Activated CD8-positive, alpha-beta T cell treated with anti-CD3 and anti-CD28 coated beads, Interleukin-2, amount 10 ng/mL, durations not matched to agents 7 days and 5 days (primary cell): ENCODE measurements at regions of chr3 and their contacts with region 1.

Region 1: GRCh38 chr3:149752051-149752787 is at the start of gene COMMD2:
- DNase-seq: peak; percentile 86
- ATAC-seq: peak; percentile 99
- H3K4me3 Mint-ChIP-seq: peak within 1 kb of the TSS; percentile 95
- H3K27ac Mint-ChIP-seq: peak within 1 kb of the TSS; percentile 93
- H3K4me1 Mint-ChIP-seq: peaks cover 17% of the 10 kb centered on the region
- H3K27me3 Mint-ChIP-seq: no peaks in the 10 kb centered on the region
- total RNA-seq, gene COMMD2: 32.3 to 35.1 TPM

Region 2: DNA sequence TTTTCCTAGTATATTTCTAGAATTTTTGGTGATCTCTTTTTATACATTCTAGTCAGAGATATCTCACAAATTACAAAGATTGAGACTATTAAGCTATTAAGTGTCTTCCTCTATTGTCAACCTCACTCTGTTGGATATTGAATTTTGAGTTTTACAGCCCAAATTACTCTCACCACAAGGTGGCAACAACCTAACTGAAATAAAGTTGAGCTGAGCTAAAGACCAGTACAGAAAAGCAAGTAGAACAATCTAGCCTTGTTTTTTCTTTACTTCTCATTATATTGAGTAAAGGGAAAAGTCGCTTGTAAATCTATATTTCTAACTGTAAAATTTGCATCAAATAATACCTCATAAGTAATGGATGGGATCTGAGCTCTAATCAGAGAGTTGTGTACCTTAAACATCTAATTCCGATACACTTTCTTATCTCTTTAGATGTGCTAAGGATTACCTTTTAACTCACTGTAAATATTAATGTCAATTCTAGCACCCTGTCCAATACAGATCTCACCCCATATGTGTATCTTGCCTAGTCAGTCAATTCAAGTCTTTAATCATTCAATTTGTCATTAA is 13.6 kb after region 1 on chr3:
- CTCF ChIA-PET with region 1: interaction called, 25 read pairs
- POLR2A ChIA-PET with region 1: interaction called, 6 read pairs
- DNase-seq: no peak
- ATAC-seq: no peak
- H3K4me3 Mint-ChIP-seq: no peak overlapping the region
- H3K27ac Mint-ChIP-seq: no peak overlapping the region
- H3K4me1 Mint-ChIP-seq: no peaks in the 10 kb centered on the region
- H3K27me3 Mint-ChIP-seq: peaks cover 18% of the 10 kb centered on the region

Region 3: DNA sequence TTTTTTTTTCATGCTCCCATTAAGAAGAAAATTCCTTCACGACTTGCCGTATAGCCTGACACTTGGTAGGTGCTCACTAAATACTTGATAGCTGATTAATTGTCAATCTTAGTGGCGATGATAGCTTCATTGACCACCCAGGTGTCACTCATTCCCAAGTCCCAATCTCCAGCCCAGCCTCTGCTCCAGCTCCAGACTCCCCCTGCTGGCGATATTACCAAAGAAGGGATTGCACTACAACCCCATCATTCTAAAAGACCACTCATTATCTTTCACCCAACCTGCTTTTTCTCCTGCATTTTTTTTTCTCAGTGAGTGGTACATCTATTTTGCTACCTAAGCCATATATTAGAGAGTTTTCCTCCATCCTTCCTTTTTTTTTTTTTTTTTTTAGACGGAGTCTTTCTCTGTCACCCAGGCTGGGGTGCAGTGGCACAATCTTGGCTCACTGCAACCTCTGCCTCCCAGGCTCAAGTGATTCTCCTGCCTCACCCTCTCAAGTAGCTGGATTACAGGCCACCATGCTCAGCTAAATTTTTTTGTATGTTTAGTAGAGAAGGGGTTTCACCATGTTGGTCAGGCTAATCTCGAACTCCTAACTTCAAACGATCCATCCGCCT is 19.5 kb after region 1 on chr3:
- CTCF ChIA-PET with region 1: interaction called, 25 read pairs
- POLR2A ChIA-PET with region 1: interaction called, 6 read pairs
- DNase-seq: peak; percentile 60
- ATAC-seq: peak; percentile 65
- H3K4me3 Mint-ChIP-seq: no peak overlapping the region
- H3K27ac Mint-ChIP-seq: no peak overlapping the region
- H3K4me1 Mint-ChIP-seq: no peaks in the 10 kb centered on the region
- H3K27me3 Mint-ChIP-seq: peaks cover 22% of the 10 kb centered on the region